A673 (cell line): ENCODE measurements at regions of chr10 and their contacts with region 1.

Region 1: DNA sequence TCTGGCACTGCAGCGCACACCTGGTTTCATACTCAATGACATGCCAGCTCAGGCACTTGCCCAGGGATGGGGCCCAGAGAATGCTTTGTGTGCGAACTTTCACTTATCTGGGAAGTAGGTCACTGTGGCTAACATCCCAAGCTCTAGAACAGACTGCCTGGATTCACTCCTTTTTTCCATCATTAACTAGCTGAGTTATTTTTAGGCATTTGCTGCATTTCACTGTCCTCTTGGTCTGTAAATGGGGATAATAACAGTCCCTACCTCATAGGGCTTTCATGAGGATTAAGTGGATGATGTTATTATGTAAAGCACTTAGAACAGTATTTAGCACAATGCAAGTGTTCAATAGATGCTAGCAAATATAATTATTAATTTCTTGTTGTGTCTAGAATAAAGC is 98.7 kb upstream of the DOCK1 start:
- DNase-seq: no peak
- H3K4me3 ChIP-seq: no peak overlapping the region
- H3K27ac ChIP-seq: no peak overlapping the region
- H3K4me1 ChIP-seq: no peaks in the 10 kb centered on the region
- H3K27me3 ChIP-seq: no peaks in the 10 kb centered on the region
- CTCF ChIP-seq: no peak

Region 2: DNA sequence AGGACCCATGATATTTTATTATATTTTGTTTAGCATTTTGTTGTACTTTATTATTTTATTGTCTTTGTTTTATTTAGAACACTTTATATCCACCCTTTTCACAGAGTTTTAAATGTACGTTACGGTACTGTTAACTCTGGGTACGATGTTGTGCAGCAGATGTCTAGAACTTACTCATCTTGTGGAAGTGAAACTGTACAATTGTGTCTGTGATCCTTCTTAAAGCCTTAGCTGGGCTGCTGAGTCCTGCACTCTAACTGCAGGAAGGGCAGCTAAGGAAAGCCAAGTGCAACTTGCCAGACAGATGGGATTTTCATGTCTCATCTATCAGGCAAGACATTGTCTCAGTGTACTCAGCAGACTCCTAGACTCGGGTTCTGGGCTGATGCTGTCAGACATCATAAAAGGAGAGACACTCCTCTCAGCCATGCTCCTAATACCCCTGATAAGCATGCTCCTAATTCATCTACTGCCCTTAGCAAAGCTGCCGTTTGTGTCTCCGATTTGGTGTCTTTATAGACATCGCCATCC is 404.5 kb after region 1 on chr10:
- CTCF ChIA-PET with region 1: no interaction called
- POLR2A ChIA-PET with region 1: interaction called, 11 read pairs
- intact Hi-C with region 1: no loop called
- DNase-seq: no peak
- H3K4me3 ChIP-seq: no peak overlapping the region
- H3K27ac ChIP-seq: no peak overlapping the region
- H3K4me1 ChIP-seq: peaks cover 3% of the 10 kb centered on the region
- H3K27me3 ChIP-seq: no peaks in the 10 kb centered on the region
- CTCF ChIP-seq: no peak